ENCODE measurements at regions of chr9 and their contacts with region 1.

Region 1: DNA sequence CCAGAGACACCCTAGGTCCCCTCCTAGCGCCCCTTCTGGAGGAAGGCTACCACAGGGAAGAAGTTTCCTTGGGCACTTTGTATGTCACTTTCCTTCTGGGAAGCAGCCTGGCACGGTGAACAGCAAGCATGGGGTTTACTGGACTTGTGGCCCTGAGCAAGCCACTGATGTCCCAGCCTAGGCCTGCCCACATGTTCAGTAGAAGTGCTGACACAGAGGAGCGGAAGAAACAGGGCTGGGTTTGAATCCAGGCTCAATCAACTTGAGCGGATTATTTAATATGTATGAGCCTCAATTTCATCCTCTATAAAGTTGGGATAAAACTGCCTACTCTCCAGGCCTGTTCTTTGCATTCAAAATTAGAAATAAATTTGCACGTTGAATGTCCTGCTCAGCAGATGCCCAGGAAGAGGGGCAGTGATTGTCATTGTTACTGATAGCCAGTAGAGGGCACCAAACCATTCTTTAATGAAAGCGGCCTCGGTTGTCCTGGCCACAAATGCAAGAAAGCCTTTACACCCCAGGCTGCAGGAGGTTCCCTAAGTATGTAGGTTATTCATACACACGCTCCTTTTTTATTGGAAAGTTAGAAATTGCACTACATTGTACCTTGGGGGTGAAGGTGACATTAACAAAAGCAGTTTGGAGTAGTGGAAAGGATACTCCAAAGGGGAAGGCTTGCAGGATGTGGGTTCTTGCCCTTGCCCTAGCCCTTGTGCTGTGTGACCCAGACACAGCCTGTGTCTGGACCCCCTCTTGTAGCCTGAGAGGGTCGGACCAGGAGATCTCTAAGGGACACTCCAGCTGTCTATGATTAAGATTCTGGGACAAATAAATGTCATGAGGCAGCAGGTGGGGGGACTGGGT is 13.4 kb upstream of the XPA start:
- DNase-seq: peak; percentile 85
- H3K4me3 ChIP-seq: no peak overlapping the region
- H3K27ac ChIP-seq: no peak overlapping the region
- H3K4me1 ChIP-seq: peaks cover 18% of the 10 kb centered on the region
- H3K27me3 ChIP-seq: no peaks in the 10 kb centered on the region

Region 2: GRCh38 chr9:97900738-97901565 is 190.4 kb after region 1 on chr9:
- in situ Hi-C with region 1: loop called (anchors 5 kb)
- DNase-seq: peak; percentile 71
- H3K4me3 ChIP-seq: peak overlapping the region; percentile 32
- H3K27ac ChIP-seq: peak overlapping the region; percentile 56
- H3K4me1 ChIP-seq: peaks cover 15% of the 10 kb centered on the region
- H3K27me3 ChIP-seq: no peaks in the 10 kb centered on the region

Measured in GM23248 (cell line).